Heart right ventricle (tissue), 16 donors: ENCODE measurements at regions of chr6 and their contacts with region 1.

Region 1: GRCh38 chr6:107489636-107490565 is at the start of gene SOBP:
- DNase-seq: peak; percentile 78 to 81
- ATAC-seq: peak; percentile 39 to 78 (median 53)
- H3K4me3 ChIP-seq: peak within 1 kb of the TSS; percentile 66 to 89 (median 82)
- H3K27ac ChIP-seq: peak within 1 kb of the TSS; percentile 74 to 92 (median 86)
- H3K4me1 ChIP-seq: peaks cover 1 to 55% (median 34%) of the 10 kb centered on the region in 9 donors
- H3K27me3 ChIP-seq: peaks cover 0 to 81% (median 0%) of the 10 kb centered on the region in 7 donors
- CTCF ChIP-seq: peak in 4 of 9 donors; percentile 26 to 45 (median 37)
- total RNA-seq, gene SOBP: 11.1 to 25.3 (median 19.6) TPM

Region 2: GRCh38 chr6:107318100-107318736 is 171.7 kb before region 1 on chr6:
- intact Hi-C with region 1: loop called in 1 of 10 experiments (anchors 10 kb)
- DNase-seq: peak; percentile 20 to 50
- ATAC-seq: peak in 7 of 8 donors; percentile 73 to 94 (median 87)
- H3K4me3 ChIP-seq: no peak overlapping the region
- H3K27ac ChIP-seq: no peak overlapping the region
- H3K4me1 ChIP-seq: peaks cover 0 to 7% (median 0%) of the 10 kb centered on the region in 9 donors
- H3K27me3 ChIP-seq: no peaks in the 10 kb centered on the region
- CTCF ChIP-seq: peak; percentile 18 to 82 (median 67)

Region 3: GRCh38 chr6:107399935-107400334 is 90.0 kb before region 1 on chr6:
- intact Hi-C with region 1: no loop called
- DNase-seq: no peak
- ATAC-seq: no peak
- H3K4me3 ChIP-seq: no peak overlapping the region
- H3K27ac ChIP-seq: no peak overlapping the region
- H3K4me1 ChIP-seq: no peaks in the 10 kb centered on the region
- H3K27me3 ChIP-seq: no peaks in the 10 kb centered on the region
- CTCF ChIP-seq: no peak

Region 4: DNA sequence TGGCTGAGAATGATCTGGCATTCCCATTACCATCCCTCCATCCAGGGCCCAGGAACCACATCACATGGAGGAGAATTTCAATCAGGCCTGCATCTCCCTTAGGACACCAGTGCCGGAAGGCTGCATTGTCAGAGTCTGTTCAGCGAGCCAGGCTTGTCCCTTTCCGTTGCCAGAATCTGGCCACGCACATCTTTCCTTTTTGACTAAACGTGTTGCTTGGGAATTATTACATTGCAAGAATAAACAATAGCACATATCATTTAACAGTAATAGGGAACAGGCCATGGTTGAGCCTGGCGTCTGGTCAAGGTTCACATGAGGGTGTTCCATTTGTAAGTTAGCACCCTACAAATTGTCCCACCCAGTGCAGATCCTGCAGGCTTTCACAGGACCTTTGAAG is 42.8 kb after region 1 on chr6:
- intact Hi-C with region 1: loop called in 3 of 10 experiments (anchors 5 kb)
- DNase-seq: peak; percentile 22 to 31
- ATAC-seq: peak in 7 of 8 donors; percentile 60 to 73 (median 70)
- H3K4me3 ChIP-seq: no peak overlapping the region
- H3K27ac ChIP-seq: peak overlapping the region in 4 of 10 donors; percentile 6 to 55 (median 34)
- H3K4me1 ChIP-seq: peaks cover 0 to 62% (median 15%) of the 10 kb centered on the region in 9 donors
- H3K27me3 ChIP-seq: no peaks in the 10 kb centered on the region
- CTCF ChIP-seq: no peak

Region 5: DNA sequence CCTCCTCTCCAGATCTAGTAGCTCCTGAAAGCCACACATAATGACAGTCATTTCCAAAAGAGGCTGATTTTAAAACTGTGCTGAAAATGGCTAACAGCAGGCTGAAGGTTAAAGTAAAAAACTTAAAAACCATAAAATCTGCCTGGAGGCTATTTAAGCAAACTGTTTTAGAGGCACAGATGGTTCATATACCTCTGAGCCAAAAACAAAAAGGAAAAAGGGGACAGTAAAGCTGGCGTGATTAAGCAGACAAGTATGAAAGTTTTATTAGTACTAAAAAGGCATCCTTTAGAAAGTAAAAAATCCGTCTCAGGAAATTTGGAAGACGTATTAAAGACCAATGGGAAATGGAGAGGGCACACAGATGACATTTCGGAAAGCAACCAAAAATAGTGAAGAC is 55.9 kb after region 1 on chr6:
- intact Hi-C with region 1: loop called in 4 of 10 experiments (anchors 5 to 10 kb)
- DNase-seq: no peak
- ATAC-seq: no peak
- H3K4me3 ChIP-seq: no peak overlapping the region
- H3K27ac ChIP-seq: peak overlapping the region in 7 of 10 donors; percentile 14 to 63 (median 25)
- H3K4me1 ChIP-seq: peaks cover 0 to 49% (median 23%) of the 10 kb centered on the region in 9 donors
- H3K27me3 ChIP-seq: no peaks in the 10 kb centered on the region
- CTCF ChIP-seq: no peak

Region 6: GRCh38 chr6:107600936-107601335 is 111.0 kb after region 1 on chr6:
- intact Hi-C with region 1: loop called in 1 of 10 experiments (anchors 10 kb)
- DNase-seq: peak in 1 of 2 donors; percentile 29
- ATAC-seq: peak; percentile 30 to 87 (median 67)
- H3K4me3 ChIP-seq: no peak overlapping the region
- H3K27ac ChIP-seq: peak overlapping the region in 1 of 10 donors; percentile 8
- H3K4me1 ChIP-seq: peaks cover 0 to 68% (median 49%) of the 10 kb centered on the region in 9 donors
- H3K27me3 ChIP-seq: no peaks in the 10 kb centered on the region
- CTCF ChIP-seq: no peak

Region 7: GRCh38 chr6:107657755-107658461 is 168.0 kb after region 1 on chr6:
- intact Hi-C with region 1: loop called in 7 of 10 experiments (anchors 2 to 10 kb)
- DNase-seq: peak; percentile 46 to 48
- ATAC-seq: peak; percentile 15 to 76 (median 44)
- H3K4me3 ChIP-seq: peak overlapping the region in 5 of 10 donors; percentile 10 to 26 (median 18)
- H3K27ac ChIP-seq: peak overlapping the region in 6 of 10 donors; percentile 3 to 45 (median 21)
- H3K4me1 ChIP-seq: peaks cover 0 to 79% (median 34%) of the 10 kb centered on the region in 9 donors
- H3K27me3 ChIP-seq: no peaks in the 10 kb centered on the region
- CTCF ChIP-seq: peak in 2 of 9 donors; percentile 17 to 30